ENCODE measurements at regions of chr15 and their contacts with region 1.

Region 1: GRCh38 chr15:99104788-99105513 is at the start of gene SYNM:
- DNase-seq: peak; percentile 86 to 94
- ATAC-seq: peak; percentile 79 to 88 (median 82)
- H3K4me3 ChIP-seq: peak within 1 kb of the TSS; percentile 71
- H3K27ac ChIP-seq: peak within 1 kb of the TSS; percentile 96
- H3K4me1 ChIP-seq: peaks cover 30% of the 10 kb centered on the region
- H3K27me3 ChIP-seq: no peaks in the 10 kb centered on the region
- CTCF ChIP-seq: peak; percentile 95
- total RNA-seq, gene SYNM: 288 to 380 (median 349) TPM

Region 2: DNA sequence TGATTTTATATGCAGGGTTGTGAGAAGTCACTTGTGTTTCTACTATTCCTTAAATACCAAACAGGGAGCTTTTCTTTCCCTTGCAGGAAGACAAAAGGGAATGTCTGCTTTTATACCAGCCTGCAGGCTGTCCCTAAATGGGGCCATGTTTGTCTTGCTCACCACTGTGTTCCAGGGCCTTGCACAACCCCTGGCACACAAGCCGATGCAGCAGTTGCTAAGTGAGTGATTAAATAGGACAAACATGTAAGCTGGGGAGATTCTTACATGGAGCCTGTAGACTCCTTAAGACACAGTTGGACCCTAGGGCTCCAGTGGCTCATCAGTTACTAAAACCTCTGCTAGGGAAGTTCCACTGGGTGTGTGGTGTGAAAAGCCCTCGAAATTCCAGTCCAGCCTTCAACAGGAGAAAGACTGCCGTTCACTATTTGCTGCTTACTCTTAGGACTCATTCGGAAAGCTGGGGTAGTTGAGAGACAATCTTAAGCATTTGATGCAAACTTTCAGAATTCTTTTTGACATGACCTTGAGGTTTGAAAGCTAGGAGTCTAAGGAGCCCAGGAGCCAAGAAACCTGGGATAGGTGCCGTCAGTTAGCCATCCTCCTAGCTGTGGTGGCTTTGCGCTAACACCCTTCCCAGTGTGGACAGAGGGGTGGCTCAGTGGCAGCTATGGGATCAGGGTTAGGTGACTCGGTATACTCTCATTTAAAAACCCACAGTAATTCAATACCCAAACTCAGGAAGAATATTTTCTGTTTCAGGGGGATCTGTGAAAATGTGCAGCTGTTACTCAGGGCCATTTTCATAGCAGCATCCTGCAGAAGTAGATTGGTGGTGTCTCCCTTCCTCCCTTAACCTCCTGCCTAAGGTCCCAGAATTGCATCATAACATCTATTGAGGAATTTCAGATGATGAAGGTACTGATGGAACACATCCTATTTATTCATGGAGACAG is 39.0 kb after region 1 on chr15:
- intact Hi-C with region 1: loop called in 1 of 2 experiments (anchors 5 kb)
- DNase-seq: peak; percentile 89 to 93
- ATAC-seq: peak; percentile 92 to 95 (median 94)
- H3K4me3 ChIP-seq: no peak overlapping the region
- H3K27ac ChIP-seq: peak overlapping the region; percentile 76
- H3K4me1 ChIP-seq: peaks cover 40% of the 10 kb centered on the region
- H3K27me3 ChIP-seq: no peaks in the 10 kb centered on the region
- CTCF ChIP-seq: no peak

Region 3: GRCh38 chr15:99213187-99213811 is 108.3 kb after region 1 on chr15:
- intact Hi-C with region 1: loop called (anchors 1 to 2 kb)
- DNase-seq: peak; percentile 81 to 88
- ATAC-seq: peak; percentile 82 to 91 (median 83)
- H3K4me3 ChIP-seq: no peak overlapping the region
- H3K27ac ChIP-seq: peak overlapping the region; percentile 75
- H3K4me1 ChIP-seq: peaks cover 17% of the 10 kb centered on the region
- H3K27me3 ChIP-seq: no peaks in the 10 kb centered on the region
- CTCF ChIP-seq: peak; percentile 96